ENCODE measurements at regions of chr10 and their contacts with region 1.

Region 1: GRCh38 chr10:88990384-88991160 is at the start of gene FAS:
- DNase-seq: peak; percentile 88
- ATAC-seq: peak; percentile 80
- H3K4me3 Mint-ChIP-seq: peak within 1 kb of the TSS; percentile 95
- H3K27ac Mint-ChIP-seq: peak within 1 kb of the TSS; percentile 95
- H3K4me1 Mint-ChIP-seq: peaks cover 71% of the 10 kb centered on the region
- H3K27me3 Mint-ChIP-seq: no peaks in the 10 kb centered on the region
- total RNA-seq, gene FAS: 58.5 to 62.6 TPM

Region 2: DNA sequence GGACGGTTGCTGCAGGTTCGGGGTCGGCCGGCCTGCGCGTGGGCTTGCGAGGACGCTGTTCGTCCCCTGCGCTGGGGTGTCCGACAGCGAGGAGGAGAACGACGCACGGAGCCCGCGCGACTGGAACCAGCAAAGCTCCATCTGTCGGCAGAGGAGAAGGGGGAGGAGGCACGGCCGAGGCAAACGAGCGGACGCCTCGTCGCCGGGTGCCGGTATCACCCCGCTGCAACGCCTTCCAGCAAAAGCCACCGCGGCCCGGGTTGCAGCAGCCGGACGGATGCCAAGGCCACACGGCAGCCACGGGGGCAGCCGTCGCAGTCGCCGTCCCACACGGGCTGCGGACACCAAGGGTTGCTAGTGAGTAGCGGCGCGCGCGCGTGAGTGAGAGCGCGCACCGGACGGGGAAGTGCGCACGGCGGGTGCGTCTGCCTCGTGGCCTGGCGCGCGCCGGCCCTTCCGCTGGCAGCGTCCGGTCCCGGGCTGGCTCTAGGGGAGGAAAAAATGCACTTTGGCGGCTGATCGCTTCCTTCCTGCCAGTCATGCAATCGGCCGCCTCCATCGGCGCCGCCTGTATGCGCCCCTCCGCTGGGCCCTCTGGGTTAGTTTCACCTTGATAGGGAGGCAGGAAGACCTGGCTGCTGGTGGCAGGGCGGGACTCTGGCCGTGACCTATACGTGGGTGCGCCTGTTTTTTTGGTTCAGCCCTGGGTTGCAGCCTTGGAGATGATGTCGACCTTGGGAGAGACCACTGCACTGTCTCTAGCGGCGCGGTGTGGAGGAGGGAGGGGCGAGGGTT is 110.1 kb before region 1 on chr10:
- CTCF ChIA-PET with region 1: interaction called, 5 read pairs
- POLR2A ChIA-PET with region 1: interaction called, 15 read pairs
- DNase-seq: peak; percentile 87
- ATAC-seq: peak; percentile 81
- H3K4me3 Mint-ChIP-seq: peak overlapping the region; percentile 98
- H3K27ac Mint-ChIP-seq: peak overlapping the region; percentile 98
- H3K4me1 Mint-ChIP-seq: peaks cover 70% of the 10 kb centered on the region
- H3K27me3 Mint-ChIP-seq: no peaks in the 10 kb centered on the region

Region 3: GRCh38 chr10:88974446-88975376 is 15.9 kb before region 1 on chr10:
- CTCF ChIA-PET with region 1: interaction called, 8 read pairs
- POLR2A ChIA-PET with region 1: interaction called, 22 read pairs
- DNase-seq: no peak
- ATAC-seq: peak; percentile 79
- H3K4me3 Mint-ChIP-seq: peak overlapping the region; percentile 88
- H3K27ac Mint-ChIP-seq: peak overlapping the region; percentile 90
- H3K4me1 Mint-ChIP-seq: peaks cover 27% of the 10 kb centered on the region
- H3K27me3 Mint-ChIP-seq: no peaks in the 10 kb centered on the region

Region 4: GRCh38 chr10:89001024-89001728 is 10.6 kb after region 1 on chr10:
- CTCF ChIA-PET with region 1: interaction called, 12 read pairs
- POLR2A ChIA-PET with region 1: interaction called, 35 read pairs
- DNase-seq: peak; percentile 52
- ATAC-seq: peak; percentile 75
- H3K4me3 Mint-ChIP-seq: peak overlapping the region; percentile 59
- H3K27ac Mint-ChIP-seq: peak overlapping the region; percentile 70
- H3K4me1 Mint-ChIP-seq: peaks cover 66% of the 10 kb centered on the region
- H3K27me3 Mint-ChIP-seq: no peaks in the 10 kb centered on the region

Region 5: DNA sequence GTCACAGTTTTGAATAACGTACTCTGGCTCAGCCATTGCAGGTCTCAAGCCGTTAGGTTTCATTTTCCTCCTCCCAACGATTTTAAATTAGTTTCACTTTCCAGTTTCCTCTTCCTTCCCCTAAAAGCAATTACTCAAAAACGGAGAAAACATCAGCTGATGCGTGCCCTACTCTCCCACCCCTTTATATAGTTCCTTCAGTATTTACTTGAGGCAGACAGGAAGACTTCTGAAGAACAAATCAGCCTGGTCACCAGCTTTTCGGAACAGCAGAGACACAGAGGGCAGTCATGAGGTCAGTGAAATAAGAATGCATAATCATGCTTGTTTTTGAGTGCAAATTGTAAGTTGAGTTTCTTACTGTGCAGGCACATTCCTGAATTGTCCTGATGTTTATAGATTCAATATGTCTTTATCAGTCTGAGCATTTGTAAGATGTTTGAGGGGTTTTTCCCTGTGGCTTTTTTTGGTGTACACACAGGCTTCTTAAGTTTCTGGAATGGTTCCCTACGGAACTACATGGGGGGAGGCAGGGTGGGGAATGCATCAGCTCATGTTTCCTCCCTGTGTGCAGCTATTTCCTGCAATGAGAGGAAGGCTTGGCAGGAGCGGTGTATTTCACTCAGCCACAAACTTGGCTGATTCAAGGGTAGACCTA is 337.3 kb after region 1 on chr10 and contains the start of gene IFIT3:
- CTCF ChIA-PET with region 1: no interaction called
- POLR2A ChIA-PET with region 1: interaction called, 10 read pairs
- DNase-seq: peak; percentile 48
- ATAC-seq: peak; percentile 42
- H3K4me3 Mint-ChIP-seq: peak within 1 kb of the TSS; percentile 93
- H3K27ac Mint-ChIP-seq: peak within 1 kb of the TSS; percentile 96
- H3K4me1 Mint-ChIP-seq: peaks cover 63% of the 10 kb centered on the region
- H3K27me3 Mint-ChIP-seq: no peaks in the 10 kb centered on the region
- total RNA-seq, gene IFIT3: 42.8 to 43.7 TPM

Measured in activated CD8-positive, alpha-beta T cell treated with anti-CD3 and anti-CD28 coated beads, Interleukin-2, amount 10 ng/mL, durations not matched to agents 7 days and 5 days (primary cell).